Psoas muscle (tissue), 8 donors: ENCODE measurements at regions of chr12 and their contacts with region 1.

Region 1: GRCh38 chr12:67355578-67356379 is 86.6 kb downstream of the CAND1 start:
- DNase-seq: no peak
- ATAC-seq: peak; percentile 61 to 85 (median 72)
- H3K4me3 ChIP-seq: peak overlapping the region; percentile 62
- H3K27ac ChIP-seq: peak overlapping the region; percentile 78
- H3K4me1 ChIP-seq: peaks cover 28% of the 10 kb centered on the region
- H3K27me3 ChIP-seq: no peaks in the 10 kb centered on the region
- CTCF ChIP-seq: peak; percentile 55

Region 2: DNA sequence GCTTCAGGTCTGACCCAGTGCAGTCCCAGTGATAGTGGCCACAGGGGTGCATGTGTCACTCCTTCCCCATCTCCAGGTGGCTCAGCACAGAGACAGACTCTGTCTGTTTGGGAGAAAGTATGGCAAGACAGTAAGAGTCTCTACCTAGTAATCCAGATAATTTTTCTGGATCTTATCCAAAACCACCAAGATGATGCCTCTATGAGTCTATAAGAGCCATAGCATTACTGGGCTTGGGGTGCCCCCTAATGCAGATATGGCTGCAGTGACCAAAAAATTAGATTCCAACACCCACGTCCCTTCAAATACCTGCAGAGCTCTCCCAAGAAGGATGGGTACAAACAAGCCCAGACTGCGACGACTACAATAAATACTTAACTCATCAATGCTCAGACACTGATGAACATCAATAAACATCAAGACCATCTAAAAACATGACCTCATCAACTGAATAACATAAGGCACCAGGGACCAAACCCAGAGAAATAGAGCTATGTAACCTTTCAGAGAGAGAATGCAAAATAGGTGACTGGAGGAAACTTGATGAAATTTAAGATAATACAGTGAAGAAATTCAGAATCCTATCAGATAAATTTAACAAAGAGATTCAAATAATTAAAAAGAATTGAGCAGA is 800.5 kb before region 1 on chr12:
- intact Hi-C with region 1: no loop called
- DNase-seq: no peak
- ATAC-seq: no peak
- H3K4me3 ChIP-seq: no peak overlapping the region
- H3K27ac ChIP-seq: no peak overlapping the region
- H3K4me1 ChIP-seq: no peaks in the 10 kb centered on the region
- H3K27me3 ChIP-seq: no peaks in the 10 kb centered on the region
- CTCF ChIP-seq: no peak

Region 3: DNA sequence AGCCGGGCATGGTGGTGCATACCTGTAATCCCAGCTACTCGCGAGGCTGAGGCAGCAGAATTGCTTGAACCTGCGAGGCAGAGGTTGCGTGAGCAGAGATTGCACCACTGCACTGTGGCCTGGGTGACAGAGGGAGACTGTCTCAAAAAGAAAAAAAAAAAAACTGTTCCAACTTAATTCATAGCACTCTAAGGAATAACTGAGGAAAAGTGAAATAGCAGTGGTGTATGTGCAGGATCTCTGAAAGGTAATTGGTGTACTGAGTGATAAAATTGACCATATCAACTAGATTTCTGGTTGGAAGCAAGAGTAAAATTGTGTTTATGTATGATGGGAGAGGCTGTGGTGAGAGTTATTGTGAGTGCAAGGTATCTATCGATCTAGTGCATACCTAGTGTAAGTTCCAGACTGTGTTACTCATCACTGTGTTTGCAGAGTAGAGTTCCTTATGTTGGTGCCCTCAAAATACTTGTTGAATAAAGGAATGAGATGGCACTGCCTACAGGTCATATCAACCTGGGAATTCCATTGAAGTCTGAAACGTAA is 80.3 kb before region 1 on chr12:
- intact Hi-C with region 1: no loop called
- DNase-seq: no peak
- ATAC-seq: peak in 3 of 4 donors; percentile 33 to 45 (median 44)
- H3K4me3 ChIP-seq: no peak overlapping the region
- H3K27ac ChIP-seq: no peak overlapping the region
- H3K4me1 ChIP-seq: peaks cover 78% of the 10 kb centered on the region
- H3K27me3 ChIP-seq: no peaks in the 10 kb centered on the region
- CTCF ChIP-seq: no peak

Region 4: GRCh38 chr12:67394550-67394949 is 38.8 kb after region 1 on chr12:
- intact Hi-C with region 1: loop called in 1 of 2 experiments (anchors 2 kb)
- DNase-seq: peak; percentile 68 to 87
- ATAC-seq: peak; percentile 93 to 97 (median 97)
- H3K4me3 ChIP-seq: peak overlapping the region; percentile 13
- H3K27ac ChIP-seq: peak overlapping the region; percentile 76
- H3K4me1 ChIP-seq: peaks cover 39% of the 10 kb centered on the region
- H3K27me3 ChIP-seq: no peaks in the 10 kb centered on the region
- CTCF ChIP-seq: peak; percentile 55

Region 5: DNA sequence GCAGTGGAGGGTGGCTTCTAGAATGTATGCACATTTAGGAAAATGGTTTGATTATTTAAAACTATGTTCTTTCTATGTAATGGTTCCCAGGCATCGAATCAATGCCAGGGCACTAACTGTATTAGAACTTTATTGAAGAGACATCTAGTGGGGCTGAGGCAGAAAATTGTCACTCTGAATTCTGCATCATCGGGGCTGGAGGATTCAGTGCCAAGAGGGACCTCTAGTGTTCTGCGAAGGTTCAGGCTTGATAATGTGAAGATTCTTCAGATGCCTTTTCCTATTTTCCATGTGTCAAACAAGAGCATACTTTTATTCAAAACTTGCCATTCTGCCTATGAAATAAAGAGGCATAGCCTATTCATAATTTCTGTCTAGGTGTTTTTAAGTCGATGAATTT is 59.7 kb after region 1 on chr12:
- intact Hi-C with region 1: loop called (anchors 2 to 5 kb)
- DNase-seq: no peak
- ATAC-seq: peak; percentile 69 to 78 (median 74)
- H3K4me3 ChIP-seq: no peak overlapping the region
- H3K27ac ChIP-seq: no peak overlapping the region
- H3K4me1 ChIP-seq: peaks cover 32% of the 10 kb centered on the region
- H3K27me3 ChIP-seq: no peaks in the 10 kb centered on the region
- CTCF ChIP-seq: peak; percentile 55

Region 6: GRCh38 chr12:67441736-67442346 is 86.1 kb after region 1 on chr12:
- intact Hi-C with region 1: loop called (anchors 1 to 5 kb)
- DNase-seq: peak; percentile 87 to 92
- ATAC-seq: peak; percentile 95 to 98 (median 96)
- H3K4me3 ChIP-seq: peak overlapping the region; percentile 56
- H3K27ac ChIP-seq: peak overlapping the region; percentile 84
- H3K4me1 ChIP-seq: peaks cover 10% of the 10 kb centered on the region
- H3K27me3 ChIP-seq: no peaks in the 10 kb centered on the region
- CTCF ChIP-seq: peak; percentile 82